Caco-2 (cell line): ENCODE measurements at regions of chr2 and their contacts with region 1.

Region 1: GRCh38 chr2:217951513-217952164 is 51.2 kb downstream of the TNS1 start:
- DNase-seq: peak; percentile 67 to 84
- H3K4me3 ChIP-seq: no peak overlapping the region
- H3K4me3 Mint-ChIP-seq: peak overlapping the region; percentile 45
- H3K27ac Mint-ChIP-seq: peak overlapping the region; percentile 43
- H3K4me1 ChIP-seq: peaks cover 52% of the 10 kb centered on the region
- H3K4me1 Mint-ChIP-seq: peaks cover 34% of the 10 kb centered on the region
- H3K27me3 ChIP-seq: no peaks in the 10 kb centered on the region
- H3K27me3 Mint-ChIP-seq: no peaks in the 10 kb centered on the region
- CTCF ChIP-seq: no peak

Region 2: GRCh38 chr2:217774232-217774631 is 177.4 kb before region 1 on chr2:
- CTCF ChIA-PET with region 1: no interaction called
- POLR2A ChIA-PET with region 1: no interaction called
- intact Hi-C with region 1: no loop called
- DNase-seq: no peak
- H3K4me3 ChIP-seq: no peak overlapping the region
- H3K4me3 Mint-ChIP-seq: no peak overlapping the region
- H3K27ac Mint-ChIP-seq: no peak overlapping the region
- H3K4me1 ChIP-seq: no peaks in the 10 kb centered on the region
- H3K4me1 Mint-ChIP-seq: no peaks in the 10 kb centered on the region
- H3K27me3 ChIP-seq: no peaks in the 10 kb centered on the region; the same call in 1 of the 2 replicates
- H3K27me3 Mint-ChIP-seq: peaks cover 24% of the 10 kb centered on the region
- CTCF ChIP-seq: no peak

Region 3: GRCh38 chr2:217926801-217927200 is 24.8 kb before region 1 on chr2:
- CTCF ChIA-PET with region 1: no interaction called
- POLR2A ChIA-PET with region 1: no interaction called
- intact Hi-C with region 1: no loop called
- DNase-seq: no peak
- H3K4me3 ChIP-seq: no peak overlapping the region
- H3K4me3 Mint-ChIP-seq: no peak overlapping the region
- H3K27ac Mint-ChIP-seq: no peak overlapping the region
- H3K4me1 ChIP-seq: peaks cover 6% of the 10 kb centered on the region; the same call in 1 of the 2 replicates
- H3K4me1 Mint-ChIP-seq: no peaks in the 10 kb centered on the region
- H3K27me3 ChIP-seq: no peaks in the 10 kb centered on the region
- H3K27me3 Mint-ChIP-seq: no peaks in the 10 kb centered on the region
- CTCF ChIP-seq: no peak

Region 4: DNA sequence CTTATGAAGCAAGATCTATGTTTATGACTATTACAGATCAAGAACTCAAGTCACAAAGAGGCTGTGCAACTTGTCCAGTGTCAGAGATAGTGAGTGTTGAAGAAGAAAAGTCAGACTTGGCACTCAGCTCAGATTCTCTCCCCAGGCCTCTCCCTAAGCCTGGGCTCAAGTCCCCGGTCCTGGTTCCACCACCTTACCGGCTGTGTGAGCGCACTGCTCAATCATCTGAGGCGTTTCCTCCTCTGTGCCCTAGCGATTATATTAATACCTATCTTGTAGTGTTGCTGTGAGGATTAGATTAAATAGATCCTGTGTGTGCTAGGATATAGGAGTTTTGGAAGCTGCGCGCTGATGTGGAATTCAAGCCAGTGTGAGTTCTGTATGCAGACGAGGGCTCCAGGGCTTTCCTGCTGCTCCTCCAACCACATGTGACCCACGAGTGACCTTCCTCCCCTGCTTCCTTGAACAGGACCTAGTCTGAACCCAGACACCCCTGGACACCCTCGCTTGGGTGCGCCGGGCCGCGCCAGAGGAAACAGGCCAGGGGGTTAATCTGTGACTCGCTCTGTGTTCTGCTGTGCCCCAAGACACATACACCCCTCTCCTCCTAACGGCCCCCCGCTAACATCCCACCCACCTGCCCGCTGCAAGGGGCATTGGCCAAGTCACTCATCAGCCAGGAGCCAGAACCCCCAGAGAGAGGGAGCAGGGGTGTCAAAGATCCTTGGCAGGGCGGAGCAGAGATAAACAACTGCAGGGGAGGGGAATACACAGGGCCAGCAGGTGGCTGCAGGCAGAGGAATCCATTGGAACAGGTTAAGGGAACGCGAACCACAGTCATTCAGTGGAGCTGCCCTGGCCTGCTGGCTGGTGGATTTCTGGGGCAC is 12.9 kb after region 1 on chr2:
- CTCF ChIA-PET with region 1: no interaction called
- POLR2A ChIA-PET with region 1: no interaction called
- intact Hi-C with region 1: loop called (anchors 2 kb)
- DNase-seq: peak in 1 of 2 experiments; percentile 36
- H3K4me3 ChIP-seq: no peak overlapping the region
- H3K4me3 Mint-ChIP-seq: no peak overlapping the region
- H3K27ac Mint-ChIP-seq: no peak overlapping the region
- H3K4me1 ChIP-seq: peaks cover 10% of the 10 kb centered on the region
- H3K4me1 Mint-ChIP-seq: peaks cover 7% of the 10 kb centered on the region
- H3K27me3 ChIP-seq: no peaks in the 10 kb centered on the region
- H3K27me3 Mint-ChIP-seq: no peaks in the 10 kb centered on the region
- CTCF ChIP-seq: peak in 1 of 2 experiments; percentile 17

Region 5: GRCh38 chr2:218046238-218046637 is 94.6 kb after region 1 on chr2:
- CTCF ChIA-PET with region 1: no interaction called
- POLR2A ChIA-PET with region 1: no interaction called
- intact Hi-C with region 1: no loop called
- DNase-seq: no peak
- H3K4me3 ChIP-seq: no peak overlapping the region
- H3K4me3 Mint-ChIP-seq: no peak overlapping the region
- H3K27ac Mint-ChIP-seq: no peak overlapping the region
- H3K4me1 ChIP-seq: no peaks in the 10 kb centered on the region
- H3K4me1 Mint-ChIP-seq: no peaks in the 10 kb centered on the region
- H3K27me3 ChIP-seq: no peaks in the 10 kb centered on the region
- H3K27me3 Mint-ChIP-seq: peaks cover 21% of the 10 kb centered on the region
- CTCF ChIP-seq: no peak